ENCODE measurements at regions of chr18 and their contacts with region 1.

Region 1: GRCh38 chr18:12236934-12237832 is 17.0 kb upstream of the CIDEA start:
- DNase-seq: peak; percentile 20 to 35
- ATAC-seq: peak; percentile 58 to 81
- H3K4me3 ChIP-seq: no peak overlapping the region
- H3K27ac ChIP-seq: no peak overlapping the region
- H3K4me1 ChIP-seq: no peaks in the 10 kb centered on the region
- H3K27me3 ChIP-seq: no peaks in the 10 kb centered on the region
- CTCF ChIP-seq: peak; percentile 37 to 83 (median 76)
- POLR2A ChIP-seq: no peak

Region 2: GRCh38 chr18:10604182-10604581 is 1633.0 kb before region 1 on chr18:
- in situ Hi-C with region 1: loop called in 2 of 4 experiments (anchors 25 kb)
- intact Hi-C with region 1: loop called (anchors 10 kb)
- DNase-seq: no peak
- ATAC-seq: no peak
- H3K4me3 ChIP-seq: no peak overlapping the region
- H3K27ac ChIP-seq: no peak overlapping the region
- H3K4me1 ChIP-seq: no peaks in the 10 kb centered on the region
- H3K27me3 ChIP-seq: no peaks in the 10 kb centered on the region
- CTCF ChIP-seq: no peak
- POLR2A ChIP-seq: no peak

Region 3: DNA sequence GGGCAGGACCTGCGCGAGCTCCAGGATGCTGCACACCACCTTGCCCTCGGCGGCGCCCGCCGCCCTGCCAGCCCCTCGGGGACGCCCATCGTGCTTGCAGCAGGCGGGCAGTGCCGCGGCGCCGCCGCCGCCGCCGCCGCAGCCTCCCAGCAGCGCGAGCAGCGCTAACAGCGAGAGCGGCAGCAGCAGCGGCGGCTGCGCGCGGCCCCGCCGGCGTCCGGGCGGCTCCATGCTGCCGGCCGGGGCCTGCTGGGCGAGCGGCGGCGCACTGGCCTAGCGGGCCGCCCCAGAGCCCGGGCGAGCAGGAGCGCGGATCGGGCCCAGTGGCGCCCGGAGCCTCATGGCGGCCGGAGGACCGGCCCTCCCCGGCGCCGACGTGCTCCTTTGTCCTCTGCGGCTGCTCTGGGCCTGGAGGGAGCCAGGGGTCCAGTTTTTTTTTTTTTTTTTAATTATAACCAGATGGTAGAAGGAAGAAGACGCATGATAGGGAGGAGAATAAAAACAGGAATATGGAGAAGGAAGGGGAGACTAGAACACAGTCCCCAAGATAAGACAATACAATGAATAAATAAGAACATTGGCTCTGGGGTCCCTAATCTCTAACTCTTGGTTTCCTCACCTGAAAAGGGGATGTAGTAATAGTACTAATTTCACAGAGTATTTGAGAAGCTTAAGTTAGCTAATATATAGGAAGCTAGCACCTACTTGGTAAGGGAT is 160.6 kb before region 1 on chr18:
- in situ Hi-C with region 1: loop called in 1 of 4 experiments (anchors 25 kb)
- intact Hi-C with region 1: no loop called
- DNase-seq: no peak
- ATAC-seq: peak; percentile 42 to 46
- H3K4me3 ChIP-seq: no peak overlapping the region
- H3K27ac ChIP-seq: no peak overlapping the region
- H3K4me1 ChIP-seq: no peaks in the 10 kb centered on the region
- H3K27me3 ChIP-seq: no peaks in the 10 kb centered on the region
- CTCF ChIP-seq: no peak
- POLR2A ChIP-seq: no peak

Region 4: GRCh38 chr18:12092398-12093229 is 144.6 kb before region 1 on chr18:
- in situ Hi-C with region 1: loop called in 1 of 4 experiments (anchors 25 kb)
- intact Hi-C with region 1: loop called (anchors 5 kb)
- DNase-seq: no peak
- ATAC-seq: no peak
- H3K4me3 ChIP-seq: no peak overlapping the region
- H3K27ac ChIP-seq: no peak overlapping the region
- H3K4me1 ChIP-seq: no peaks in the 10 kb centered on the region
- H3K27me3 ChIP-seq: no peaks in the 10 kb centered on the region
- CTCF ChIP-seq: no peak
- POLR2A ChIP-seq: no peak

Region 5: DNA sequence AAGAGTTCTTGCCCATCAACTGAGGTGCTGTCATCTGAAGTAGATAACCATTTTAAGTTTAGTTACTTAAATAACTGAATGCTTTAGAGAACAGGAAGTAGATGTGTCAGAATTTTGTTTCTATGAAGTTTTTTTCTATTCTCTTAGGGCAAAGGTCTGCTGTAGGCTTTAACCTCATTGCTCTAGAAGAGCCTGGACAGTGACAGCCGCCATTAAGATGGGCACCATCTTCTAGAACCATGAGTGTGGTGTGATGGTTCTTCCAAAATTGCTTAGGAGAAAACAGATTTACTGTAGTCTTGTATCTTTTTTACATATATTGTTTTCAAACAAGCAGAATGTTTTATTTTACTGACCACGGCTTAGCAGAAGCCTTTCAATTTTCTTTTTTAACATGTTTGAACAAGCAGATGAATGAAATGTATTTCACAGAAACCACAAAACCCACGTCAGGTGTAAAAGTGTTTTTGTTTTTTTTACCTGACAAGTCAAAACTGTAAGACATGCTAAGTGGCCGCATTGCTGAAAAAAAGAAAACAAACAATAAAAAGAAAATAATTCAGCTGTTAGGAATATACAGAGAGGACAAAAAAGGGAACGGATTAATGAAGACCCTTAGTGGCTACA is 248.4 kb after region 1 on chr18:
- in situ Hi-C with region 1: no loop called
- intact Hi-C with region 1: no loop called
- DNase-seq: no peak
- ATAC-seq: no peak
- H3K4me3 ChIP-seq: no peak overlapping the region
- H3K27ac ChIP-seq: no peak overlapping the region
- H3K4me1 ChIP-seq: no peaks in the 10 kb centered on the region
- H3K27me3 ChIP-seq: no peaks in the 10 kb centered on the region
- CTCF ChIP-seq: no peak
- POLR2A ChIP-seq: no peak

Region 6: DNA sequence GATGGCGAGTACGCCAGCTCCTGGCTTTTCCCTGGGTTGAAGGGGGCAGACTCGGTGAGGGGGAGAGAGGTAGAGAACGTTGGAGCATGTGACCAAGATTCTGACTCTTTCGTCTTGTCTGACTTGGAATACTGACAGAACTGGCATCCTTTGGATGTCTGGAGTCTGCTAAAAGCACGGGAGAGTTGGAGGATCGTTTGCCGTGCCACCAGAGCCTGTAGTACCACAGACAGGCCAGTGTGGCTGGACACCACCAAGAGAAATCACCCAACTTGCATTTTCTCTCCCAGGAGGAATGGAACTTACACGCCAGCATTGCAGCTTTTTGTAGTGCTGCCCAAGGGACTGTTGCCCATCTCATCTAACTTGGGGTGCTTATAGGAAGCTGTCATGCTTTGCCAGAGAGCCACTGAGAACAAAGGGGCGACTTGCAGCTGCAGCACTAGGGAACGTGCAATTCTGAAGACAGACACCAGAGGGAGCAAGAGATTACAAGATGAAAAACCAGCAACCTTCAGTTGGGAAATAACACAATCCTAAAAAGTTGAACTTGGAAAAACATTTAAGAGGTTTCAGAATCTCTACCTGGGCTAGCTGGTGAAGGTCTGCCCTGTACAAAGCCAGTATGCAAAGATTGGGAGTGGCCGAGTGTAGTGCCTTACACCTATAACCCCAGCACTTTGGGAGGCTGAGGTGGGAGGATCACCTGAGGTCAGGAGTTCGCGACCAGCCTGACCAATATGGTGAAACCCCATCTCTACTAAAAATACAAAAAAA is 489.8 kb after region 1 on chr18:
- in situ Hi-C with region 1: no loop called
- intact Hi-C with region 1: no loop called
- DNase-seq: peak; percentile 14 to 25
- ATAC-seq: peak in 1 of 2 donors; percentile 58
- H3K4me3 ChIP-seq: no peak overlapping the region
- H3K27ac ChIP-seq: no peak overlapping the region
- H3K4me1 ChIP-seq: no peaks in the 10 kb centered on the region
- H3K27me3 ChIP-seq: no peaks in the 10 kb centered on the region
- CTCF ChIP-seq: peak; percentile 85 to 90 (median 89)
- POLR2A ChIP-seq: no peak